Naive thymus-derived CD4-positive, alpha-beta T cell (primary cell): ENCODE measurements at regions of chr17 and their contacts with region 1.

Region 1: GRCh38 chr17:2041561-2042366 is at the start of gene OVCA2:
- DNase-seq: peak; percentile 94 to 98 (median 96)
- ATAC-seq: peak; percentile 97
- H3K4me3 ChIP-seq: peak within 1 kb of the TSS; percentile 86
- H3K4me3 Mint-ChIP-seq: peak within 1 kb of the TSS; percentile 89 to 100 (median 92)
- H3K27ac ChIP-seq: peak within 1 kb of the TSS; percentile 89
- H3K27ac Mint-ChIP-seq: peak within 1 kb of the TSS; percentile 87 to 99 (median 94)
- H3K4me1 ChIP-seq: peaks cover 8 to 16% of the 10 kb centered on the region in 2 donors
- H3K4me1 Mint-ChIP-seq: peaks cover 9 to 29% (median 22%) of the 10 kb centered on the region in 7 donors
- H3K27me3 ChIP-seq: no peaks in the 10 kb centered on the region
- H3K27me3 Mint-ChIP-seq: no peaks in the 10 kb centered on the region
- total RNA-seq, gene OVCA2: 24.5 to 37.9 (median 31.8) TPM

Region 2: DNA sequence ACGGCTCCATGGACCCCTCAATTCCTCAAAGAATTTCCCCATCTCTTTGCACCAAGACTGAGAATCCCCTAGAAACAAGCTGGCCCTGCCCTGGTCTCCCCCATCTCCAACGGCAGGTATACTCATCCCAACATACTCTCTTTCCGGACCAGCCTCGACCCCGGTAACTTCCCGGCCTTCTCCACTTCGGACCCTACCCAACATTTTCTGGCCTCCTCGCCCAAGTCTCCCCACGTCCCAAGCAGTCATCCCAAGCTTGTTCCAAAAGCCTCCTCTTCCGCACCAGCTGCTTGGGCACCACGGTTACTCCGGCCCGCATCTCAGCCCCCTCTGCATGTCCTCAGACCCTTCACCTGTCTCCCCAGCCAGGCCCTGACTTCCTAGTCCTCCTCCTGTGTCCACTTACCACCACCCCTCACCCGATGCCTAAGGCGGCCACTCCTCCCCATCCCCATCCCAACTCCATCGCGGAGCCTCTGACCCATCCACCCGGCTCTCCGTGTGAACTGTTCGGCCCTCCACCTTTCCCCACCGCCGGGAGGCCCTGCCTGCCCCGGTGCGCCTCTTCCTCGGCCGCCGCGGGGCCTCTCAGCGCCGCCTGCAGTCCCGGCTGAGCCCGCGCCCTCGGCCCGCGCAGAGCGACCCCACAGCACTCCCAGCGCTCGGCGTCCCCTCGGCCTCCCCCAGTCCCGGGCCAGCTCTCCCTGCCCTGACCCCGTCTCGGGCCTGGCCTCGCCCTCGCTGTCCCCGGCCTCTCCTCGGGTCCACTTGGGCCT is 480.2 kb before region 1 on chr17:
- CTCF ChIA-PET with region 1: no interaction called
- POLR2A ChIA-PET with region 1: no interaction called
- intact Hi-C with region 1: loop called in 1 of 2 experiments (anchors 5 kb)
- DNase-seq: peak in 8 of 9 donors; percentile 28 to 58 (median 36)
- ATAC-seq: peak; percentile 37
- H3K4me3 ChIP-seq: peak overlapping the region; percentile 39
- H3K4me3 Mint-ChIP-seq: peak overlapping the region; percentile 73 to 89 (median 82)
- H3K27ac ChIP-seq: peak overlapping the region; percentile 76
- H3K27ac Mint-ChIP-seq: peak overlapping the region in 8 of 9 donors; percentile 54 to 90 (median 76)
- H3K4me1 ChIP-seq: peaks cover 9 to 12% of the 10 kb centered on the region in 2 donors
- H3K4me1 Mint-ChIP-seq: peaks cover 25 to 54% (median 43%) of the 10 kb centered on the region in 7 donors
- H3K27me3 ChIP-seq: no peaks in the 10 kb centered on the region
- H3K27me3 Mint-ChIP-seq: peaks cover 0 to 13% (median 0%) of the 10 kb centered on the region in 5 donors

Region 3: GRCh38 chr17:1829592-1830257 is 212.0 kb before region 1 on chr17 and contains the starts of genes RPA1 and SMYD4:
- CTCF ChIA-PET with region 1: no interaction called
- POLR2A ChIA-PET with region 1: no interaction called
- intact Hi-C with region 1: loop called in 1 of 2 experiments (anchors 5 kb)
- DNase-seq: peak; percentile 84 to 94 (median 89)
- ATAC-seq: peak; percentile 100
- H3K4me3 ChIP-seq: peak within 1 kb of the TSS; percentile 82
- H3K4me3 Mint-ChIP-seq: peak within 1 kb of the TSS; percentile 89 to 100 (median 98)
- H3K27ac ChIP-seq: peak within 1 kb of the TSS; percentile 86
- H3K27ac Mint-ChIP-seq: peak within 1 kb of the TSS; percentile 89 to 99 (median 95)
- H3K4me1 ChIP-seq: peaks cover 17 to 26% of the 10 kb centered on the region in 2 donors
- H3K4me1 Mint-ChIP-seq: peaks cover 39 to 80% (median 67%) of the 10 kb centered on the region in 7 donors
- H3K27me3 ChIP-seq: no peaks in the 10 kb centered on the region
- H3K27me3 Mint-ChIP-seq: no peaks in the 10 kb centered on the region
- total RNA-seq, gene RPA1: 57.8 to 264 (median 110) TPM
- total RNA-seq, gene SMYD4: 19.8 to 38.4 (median 32.5) TPM

Region 4: DNA sequence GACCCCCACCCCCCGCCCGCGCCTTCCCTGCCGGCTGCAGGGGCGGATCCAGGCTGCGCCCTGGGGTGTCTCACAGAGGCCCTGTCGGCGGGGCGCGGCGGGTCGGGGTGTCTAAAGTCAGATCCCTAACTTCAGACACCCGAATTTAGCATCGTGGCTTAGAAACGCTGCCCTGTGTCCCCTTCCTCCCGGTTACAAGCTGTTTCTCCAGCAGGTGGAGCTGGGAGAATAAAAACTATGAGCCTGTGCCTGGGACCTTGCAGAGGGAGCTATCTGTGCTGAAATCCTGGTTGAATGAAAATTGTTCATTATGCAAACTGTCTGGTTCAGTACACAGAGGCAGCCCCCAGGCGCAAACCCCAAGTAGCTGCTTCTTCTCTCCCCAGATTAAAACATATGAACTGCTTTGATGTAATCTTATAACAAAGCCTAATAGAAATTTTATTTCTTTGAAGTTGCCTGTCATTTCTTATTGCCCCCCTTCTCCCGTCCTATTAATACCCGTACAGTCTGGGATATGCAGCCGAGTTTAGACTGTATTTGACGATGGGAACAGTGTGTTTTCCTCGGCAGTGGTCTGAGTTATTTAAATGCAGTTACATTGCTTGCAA is 133.0 kb before region 1 on chr17:
- CTCF ChIA-PET with region 1: no interaction called
- POLR2A ChIA-PET with region 1: no interaction called
- intact Hi-C with region 1: loop called in 1 of 2 experiments (anchors 2 kb)
- DNase-seq: peak in 7 of 9 donors; percentile 7 to 38 (median 25)
- ATAC-seq: peak; percentile 57
- H3K4me3 ChIP-seq: peak overlapping the region; percentile 36
- H3K4me3 Mint-ChIP-seq: peak overlapping the region; percentile 48 to 76 (median 61)
- H3K27ac ChIP-seq: no peak overlapping the region
- H3K27ac Mint-ChIP-seq: no peak overlapping the region
- H3K4me1 ChIP-seq: no peaks in the 10 kb centered on the region
- H3K4me1 Mint-ChIP-seq: peaks cover 2 to 16% (median 14%) of the 10 kb centered on the region in 7 donors
- H3K27me3 ChIP-seq: peaks cover 0 to 14% of the 10 kb centered on the region in 2 donors
- H3K27me3 Mint-ChIP-seq: peaks cover 44 to 76% (median 55%) of the 10 kb centered on the region in 5 donors

Region 5: DNA sequence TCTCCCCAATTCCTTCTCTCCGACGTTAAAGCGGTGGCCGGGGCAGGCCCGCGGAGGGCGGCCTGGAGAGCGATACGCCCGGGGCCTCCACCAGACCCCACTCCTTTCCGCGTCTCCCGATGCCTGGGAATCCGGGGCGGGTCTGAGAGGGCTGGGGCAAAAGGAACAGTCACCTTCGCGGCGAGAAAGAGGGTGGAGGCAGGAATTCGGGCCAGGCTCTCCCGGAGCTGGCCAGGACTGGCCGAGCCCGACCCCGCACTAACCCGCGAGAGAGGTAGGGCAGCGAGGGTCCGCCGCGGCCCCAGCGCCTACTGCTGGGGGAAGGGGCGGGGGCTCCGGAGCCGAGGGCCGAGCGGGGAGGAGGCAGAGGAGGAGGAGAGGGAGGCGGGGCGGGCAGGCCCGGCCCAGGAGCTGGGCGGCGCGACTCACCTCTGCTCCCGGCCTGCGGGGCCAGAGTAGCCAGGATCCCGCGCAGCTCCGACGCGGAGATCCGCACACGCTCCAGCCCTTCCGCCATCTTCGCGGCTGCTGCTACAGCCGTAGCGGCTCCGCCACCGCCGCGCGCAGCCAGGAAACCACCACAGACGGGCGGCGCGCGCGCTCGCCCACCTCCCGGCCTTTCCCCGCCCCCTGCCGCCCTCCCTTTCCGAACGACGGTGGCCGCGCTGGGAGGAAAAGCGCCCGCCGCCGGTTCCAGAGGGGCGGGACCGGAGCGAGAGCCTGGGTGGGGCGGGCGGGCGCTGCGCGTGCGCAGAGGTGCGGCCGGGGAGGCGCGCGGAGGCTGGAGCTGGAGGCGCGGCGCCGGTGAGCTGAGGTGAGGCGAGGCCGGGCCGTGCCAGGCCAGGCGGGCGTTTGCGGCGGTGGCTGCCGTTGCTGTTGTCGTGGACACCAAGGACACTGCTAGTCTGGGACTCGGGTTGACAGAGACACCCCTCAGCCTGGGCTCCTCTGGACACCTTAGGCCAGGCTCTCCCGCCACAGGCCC is 261.7 kb after region 1 on chr17 and contains the starts of genes SMG6 and SRR:
- CTCF ChIA-PET with region 1: no interaction called
- POLR2A ChIA-PET with region 1: interaction called, 4 read pairs
- intact Hi-C with region 1: loop called in 1 of 2 experiments (anchors 1 kb)
- DNase-seq: peak; percentile 87 to 95 (median 93)
- ATAC-seq: peak; percentile 97
- H3K4me3 ChIP-seq: peak within 1 kb of the TSS; percentile 87
- H3K4me3 Mint-ChIP-seq: peak within 1 kb of the TSS; percentile 90 to 98 (median 92)
- H3K27ac ChIP-seq: peak within 1 kb of the TSS; percentile 98
- H3K27ac Mint-ChIP-seq: peak within 1 kb of the TSS; percentile 76 to 95 (median 84)
- H3K4me1 ChIP-seq: peaks cover 9 to 13% of the 10 kb centered on the region in 2 donors
- H3K4me1 Mint-ChIP-seq: peaks cover 25 to 61% (median 47%) of the 10 kb centered on the region in 7 donors
- H3K27me3 ChIP-seq: no peaks in the 10 kb centered on the region
- H3K27me3 Mint-ChIP-seq: no peaks in the 10 kb centered on the region
- total RNA-seq, gene SMG6: 45.6 to 65.3 (median 55.8) TPM
- total RNA-seq, gene SRR: 3.1 to 16.0 (median 8.3) TPM